ENCODE measurements at regions of chr15 and their contacts with region 1.

Region 1: DNA sequence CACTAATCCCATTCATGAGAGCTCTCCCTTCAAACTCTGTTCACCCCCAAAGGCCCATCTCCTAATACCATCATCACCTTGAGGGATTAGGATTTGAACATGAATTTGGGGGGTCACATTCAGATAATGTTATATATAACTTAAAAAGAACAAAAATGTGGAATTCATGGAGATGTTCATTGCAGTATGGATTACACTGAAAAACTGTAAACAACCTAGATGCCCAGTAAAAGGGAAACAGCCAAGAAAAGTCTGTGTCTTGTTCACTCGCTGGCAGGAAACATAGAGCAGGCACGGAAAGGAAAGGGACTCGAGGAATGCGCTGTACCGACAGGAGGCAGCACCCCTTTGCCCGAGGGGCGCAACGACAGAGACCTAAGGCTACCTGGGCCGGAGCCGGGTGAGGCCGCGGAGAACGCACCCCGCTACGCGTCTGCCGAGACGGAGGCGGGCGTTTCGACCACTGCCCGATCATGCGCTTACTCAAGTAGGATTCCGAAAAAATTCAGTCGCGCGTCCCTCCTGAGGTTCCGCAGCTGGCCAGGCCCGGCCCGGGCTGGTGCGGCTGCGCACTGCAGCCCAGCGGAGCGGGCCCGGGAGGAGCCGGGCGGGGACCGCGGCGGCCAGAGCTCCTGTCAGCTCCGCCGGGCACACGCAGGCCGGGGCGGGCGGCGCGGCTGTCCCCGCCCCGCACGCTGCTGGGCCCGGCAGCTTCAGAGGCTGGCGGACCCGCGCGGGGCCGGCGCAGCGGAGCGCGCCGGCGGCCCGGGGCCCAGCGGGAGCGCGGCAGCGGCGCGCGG is 862 bp upstream of the MAN2A2 start:
- DNase-seq: peak; percentile 75 to 92 (median 90)
- ATAC-seq: peak; percentile 75
- H3K4me3 ChIP-seq: peak overlapping the region; percentile 69
- H3K27ac ChIP-seq: peak overlapping the region; percentile 99
- H3K4me1 ChIP-seq: peaks cover 28 to 69% of the 10 kb centered on the region in 2 experiments; a peak in 4 of 5 replicates
- H3K27me3 ChIP-seq: no peaks in the 10 kb centered on the region
- CTCF ChIP-seq: peak; percentile 61 to 77 (median 69)
- EP300 ChIP-seq: no peak
- POLR2A ChIP-seq: peak; percentile 73
- RAD21 ChIP-seq: peak in 1 of 2 experiments; percentile 45

Region 2: DNA sequence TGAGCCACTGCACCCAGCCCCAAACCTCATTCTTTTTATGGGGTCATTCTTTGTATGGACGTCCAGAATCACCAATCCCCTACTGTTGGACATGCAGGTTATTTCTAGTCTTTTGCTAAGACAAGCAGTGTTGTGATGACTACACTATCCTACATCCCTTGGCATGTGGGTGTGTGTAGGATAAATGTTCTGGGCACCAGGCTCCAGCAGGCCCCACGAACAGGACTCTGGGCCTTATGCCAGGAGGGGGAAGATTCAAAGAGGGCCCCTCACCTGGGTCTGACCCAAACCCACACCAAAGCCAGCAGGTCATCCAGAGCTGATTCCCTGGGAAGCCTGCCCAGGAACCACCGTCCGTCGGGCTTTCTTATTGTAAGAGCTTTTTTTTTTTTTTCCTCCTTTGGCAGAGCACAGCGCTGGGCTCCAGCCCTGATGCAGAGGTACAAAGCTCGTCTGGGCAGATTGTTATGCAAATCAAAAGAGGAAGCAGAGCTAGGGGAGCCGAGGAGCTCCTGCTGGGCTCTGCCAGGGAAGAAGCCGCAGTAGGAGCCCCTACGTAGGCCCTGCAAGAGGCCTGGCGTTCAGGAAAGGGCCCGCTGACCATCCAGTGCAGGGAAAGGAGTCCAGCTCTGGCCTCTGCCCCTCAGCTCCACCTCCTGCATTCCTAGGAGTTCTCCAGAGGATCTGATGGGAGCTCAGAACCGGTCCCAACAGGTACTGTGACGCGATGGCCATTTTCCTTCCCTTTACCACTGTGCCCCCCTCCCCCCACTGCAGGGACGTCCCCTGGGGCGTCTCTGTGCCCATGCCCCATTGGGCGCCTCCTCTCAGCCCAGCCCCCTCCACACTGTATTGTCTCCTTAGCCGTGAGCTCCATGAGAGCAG is 62.8 kb before region 1 on chr15:
- CTCF ChIA-PET with region 1: no interaction called
- POLR2A ChIA-PET with region 1: interaction called, 3 read pairs
- in situ Hi-C with region 1: no loop called
- intact Hi-C with region 1: loop called (anchors 2 kb)
- DNase-seq: no peak
- ATAC-seq: no peak
- H3K4me3 ChIP-seq: no peak overlapping the region
- H3K27ac ChIP-seq: peak overlapping the region; percentile 88; the same call in 2 of the 3 replicates
- H3K4me1 ChIP-seq: peaks cover 59 to 68% of the 10 kb centered on the region in 2 experiments
- H3K27me3 ChIP-seq: no peaks in the 10 kb centered on the region
- CTCF ChIP-seq: no peak
- EP300 ChIP-seq: no peak
- POLR2A ChIP-seq: no peak
- RAD21 ChIP-seq: no peak

Region 3: GRCh38 chr15:90915808-90916440 is 13.7 kb after region 1 on chr15:
- CTCF ChIA-PET with region 1: interaction called, 3 read pairs
- POLR2A ChIA-PET with region 1: interaction called, 54 read pairs
- in situ Hi-C with region 1: no loop called
- intact Hi-C with region 1: no loop called
- DNase-seq: peak; percentile 66 to 90 (median 78)
- ATAC-seq: peak; percentile 80
- H3K4me3 ChIP-seq: no peak overlapping the region
- H3K27ac ChIP-seq: peak overlapping the region; percentile 80
- H3K4me1 ChIP-seq: peaks cover 17 to 38% of the 10 kb centered on the region in 2 experiments
- H3K27me3 ChIP-seq: no peaks in the 10 kb centered on the region
- CTCF ChIP-seq: peak in 2 of 3 experiments; percentile 24 to 31; a peak in 2 of 6 replicates
- EP300 ChIP-seq: no peak; the same call in 1 of the 2 replicates
- POLR2A ChIP-seq: no peak
- RAD21 ChIP-seq: peak; percentile 25 to 52; a peak in 2 of 4 replicates

Region 4: GRCh38 chr15:90924375-90924774 is 22.1 kb after region 1 on chr15:
- CTCF ChIA-PET with region 1: no interaction called
- POLR2A ChIA-PET with region 1: interaction called, 70 read pairs
- in situ Hi-C with region 1: no loop called
- intact Hi-C with region 1: no loop called
- DNase-seq: no peak
- ATAC-seq: no peak
- H3K4me3 ChIP-seq: no peak overlapping the region
- H3K27ac ChIP-seq: peak overlapping the region; percentile 15; the same call in 1 of the 3 replicates
- H3K4me1 ChIP-seq: peaks cover 15 to 21% of the 10 kb centered on the region in 2 experiments
- H3K27me3 ChIP-seq: no peaks in the 10 kb centered on the region
- CTCF ChIP-seq: no peak
- EP300 ChIP-seq: no peak
- POLR2A ChIP-seq: no peak
- RAD21 ChIP-seq: no peak

Measured in K562 (cell line).